ENCODE measurements at regions of chr1 and their contacts with region 1.

Region 1: DNA sequence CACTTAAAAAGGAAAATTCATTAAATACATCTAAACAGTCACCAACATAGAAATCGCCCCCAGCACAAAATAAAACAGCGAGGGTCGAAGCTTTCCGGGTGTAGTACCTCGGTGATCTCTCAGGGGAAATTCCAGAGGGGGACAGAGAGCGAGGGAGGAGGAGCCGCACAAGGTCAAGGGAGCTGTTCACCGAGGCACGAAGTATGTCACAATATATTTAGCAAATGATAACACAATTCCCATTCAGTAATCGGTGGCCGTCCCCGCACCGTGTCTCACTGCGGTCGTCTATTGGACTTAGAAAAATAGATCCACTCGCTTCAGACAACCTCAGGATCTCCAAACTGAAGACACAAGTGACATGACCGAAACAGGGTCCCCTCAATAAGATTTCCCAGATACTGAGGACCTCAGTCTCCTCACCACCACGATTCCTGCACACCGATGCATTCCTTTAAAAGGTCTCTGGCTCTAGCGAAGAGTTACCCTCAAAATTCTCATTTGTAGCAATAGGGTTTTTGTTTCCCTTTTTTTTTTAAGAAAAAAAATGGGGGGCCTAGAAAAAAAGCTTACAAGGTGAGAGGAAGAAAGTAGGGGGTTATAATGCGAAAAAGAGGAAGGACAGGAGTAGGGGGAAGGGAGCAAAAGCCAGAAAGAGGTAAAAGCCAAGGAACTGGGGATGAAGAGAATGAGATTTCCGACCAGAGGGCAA is 1.1 kb downstream of the LPGAT1 start:
- DNase-seq: peak; percentile 36
- ATAC-seq: peak in 1 of 2 donors; percentile 14

Region 2: GRCh38 chr1:211591980-211592493 is 237.5 kb before region 1 on chr1:
- intact Hi-C with region 1: no loop called
- DNase-seq: no peak
- ATAC-seq: peak; percentile 66 to 85

Region 3: GRCh38 chr1:211680752-211681327 is 148.7 kb before region 1 on chr1:
- intact Hi-C with region 1: loop called in 1 of 2 experiments (anchors 10 kb)
- DNase-seq: peak; percentile 66
- ATAC-seq: peak; percentile 91 to 93

Region 4: DNA sequence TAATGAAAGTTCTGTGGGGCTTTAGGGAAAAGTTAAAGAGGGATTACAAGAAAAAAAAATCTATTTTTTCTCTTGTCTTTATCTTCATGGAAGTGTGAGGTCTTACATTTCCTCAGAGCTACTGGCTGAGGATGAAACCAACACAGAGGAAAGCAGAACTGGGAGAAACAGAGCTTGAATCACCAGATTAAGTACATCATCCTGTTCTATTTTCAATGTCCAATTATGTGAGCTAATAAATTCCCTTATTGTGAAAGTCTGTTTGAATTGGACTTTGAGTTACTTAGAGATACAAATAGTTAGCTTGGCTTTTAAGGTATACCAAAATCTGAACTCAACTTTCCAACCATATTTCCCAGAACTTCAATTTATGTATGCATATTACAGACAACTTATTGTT is 68.1 kb before region 1 on chr1:
- intact Hi-C with region 1: no loop called
- DNase-seq: no peak
- ATAC-seq: no peak

Region 5: GRCh38 chr1:211874521-211875347 is 45.2 kb after region 1 on chr1:
- intact Hi-C with region 1: no loop called
- DNase-seq: no peak
- ATAC-seq: peak in 1 of 2 donors; percentile 32

Region 6: DNA sequence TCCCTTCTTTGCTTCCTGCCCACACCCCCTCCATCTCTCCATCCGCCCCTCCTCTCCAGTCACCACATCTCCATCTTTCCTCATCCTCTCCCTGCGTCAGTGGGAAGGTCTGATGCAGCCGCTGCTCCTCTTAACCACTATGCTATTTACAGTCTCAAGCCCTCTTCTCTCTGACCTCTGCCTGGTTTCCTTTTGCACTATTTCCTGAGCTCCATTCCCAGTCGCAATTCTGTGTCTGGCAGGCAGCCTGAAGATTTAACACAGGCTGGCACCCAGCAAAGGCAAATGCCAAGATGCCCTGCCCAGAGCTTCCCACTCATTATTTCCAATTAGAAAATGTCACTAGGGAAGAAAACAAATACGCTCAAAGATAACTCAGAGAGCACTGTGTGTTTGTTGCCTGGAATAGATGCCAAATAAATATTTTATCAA is 90.7 kb after region 1 on chr1:
- intact Hi-C with region 1: loop called in 1 of 2 experiments (anchors 5 kb)
- DNase-seq: peak; percentile 57
- ATAC-seq: peak; percentile 80 to 86

Region 7: GRCh38 chr1:211975152-211975941 is 145.8 kb after region 1 on chr1:
- intact Hi-C with region 1: no loop called
- DNase-seq: no peak
- ATAC-seq: peak; percentile 33 to 61